Dendritic cell treated with granulocyte-macrophage colony-stimulating factor and Interleukin-4, amounts not matched to agents 40 ng/mL and 50 ng/mL, for 4 days (primary cell): ENCODE measurements at regions of chr1 and their contacts with region 1.

Region 1: GRCh38 chr1:11838349-11839272 is 9.0 kb downstream of the NPPA start:
- H3K4me3 Mint-ChIP-seq: no peak overlapping the region
- H3K27ac Mint-ChIP-seq: peak overlapping the region; percentile 35
- H3K4me1 Mint-ChIP-seq: peaks cover 45% of the 10 kb centered on the region
- H3K27me3 Mint-ChIP-seq: no peaks in the 10 kb centered on the region

Region 2: GRCh38 chr1:11893907-11894251 is 55.3 kb after region 1 on chr1:
- intact Hi-C with region 1: loop called (anchors 1 kb)
- H3K4me3 Mint-ChIP-seq: no peak overlapping the region
- H3K27ac Mint-ChIP-seq: no peak overlapping the region
- H3K4me1 Mint-ChIP-seq: peaks cover 12% of the 10 kb centered on the region
- H3K27me3 Mint-ChIP-seq: peaks cover 30% of the 10 kb centered on the region

Region 3: DNA sequence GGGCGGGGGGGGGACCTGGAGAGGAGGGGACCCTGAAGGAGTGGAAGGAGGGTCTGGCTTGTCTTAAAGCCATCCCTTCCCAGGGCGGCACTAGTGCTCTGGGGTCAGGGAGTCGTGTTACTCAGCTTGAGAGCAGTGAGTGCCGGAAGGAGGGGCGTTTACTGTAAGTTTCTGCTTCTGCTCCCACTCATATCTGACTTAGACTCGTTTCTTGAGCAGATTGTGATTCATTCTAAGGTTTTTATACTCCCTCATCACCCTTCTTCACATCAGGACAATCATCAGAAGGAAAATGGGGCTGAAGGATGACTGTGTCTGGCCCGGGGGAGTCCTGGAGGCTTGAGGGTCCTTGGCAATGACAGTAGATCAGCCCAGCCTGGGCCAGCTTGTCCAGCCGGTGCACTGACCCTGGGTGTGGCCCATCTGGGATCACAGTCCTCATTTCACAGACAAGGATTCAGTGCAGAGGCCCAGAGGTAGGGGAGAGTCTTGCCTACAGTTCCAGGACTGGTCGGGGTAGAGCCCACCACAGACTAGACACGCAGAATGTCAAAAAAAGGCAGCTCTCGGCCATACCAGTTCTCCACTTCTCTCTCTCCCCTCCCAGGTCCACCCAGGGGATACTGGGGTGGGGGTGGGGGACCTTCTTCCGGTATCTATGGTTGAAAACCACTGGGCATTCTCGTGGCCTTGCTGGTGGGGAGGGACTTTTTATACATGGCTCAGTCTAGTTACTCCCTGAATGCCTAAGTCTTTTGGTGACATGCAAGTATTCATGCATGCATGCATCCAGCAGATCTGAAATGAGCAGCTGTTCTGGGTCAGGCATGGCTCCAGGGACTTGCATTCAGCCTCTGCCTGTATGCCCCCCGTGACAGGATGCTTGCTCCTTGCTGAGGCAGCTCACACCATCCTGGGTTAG is 229.6 kb after region 1 on chr1:
- intact Hi-C with region 1: no loop called
- H3K4me3 Mint-ChIP-seq: no peak overlapping the region
- H3K27ac Mint-ChIP-seq: no peak overlapping the region
- H3K4me1 Mint-ChIP-seq: peaks cover 8% of the 10 kb centered on the region
- H3K27me3 Mint-ChIP-seq: peaks cover 58% of the 10 kb centered on the region